Activated CD4-positive, alpha-beta memory T cell treated with anti-CD3 and anti-CD28 coated beads, Interleukin-2, amount 10 ng/mL, durations not matched to agents 7 days and 5 days (primary cell): ENCODE measurements at regions of chr2 and their contacts with region 1.

Region 1: DNA sequence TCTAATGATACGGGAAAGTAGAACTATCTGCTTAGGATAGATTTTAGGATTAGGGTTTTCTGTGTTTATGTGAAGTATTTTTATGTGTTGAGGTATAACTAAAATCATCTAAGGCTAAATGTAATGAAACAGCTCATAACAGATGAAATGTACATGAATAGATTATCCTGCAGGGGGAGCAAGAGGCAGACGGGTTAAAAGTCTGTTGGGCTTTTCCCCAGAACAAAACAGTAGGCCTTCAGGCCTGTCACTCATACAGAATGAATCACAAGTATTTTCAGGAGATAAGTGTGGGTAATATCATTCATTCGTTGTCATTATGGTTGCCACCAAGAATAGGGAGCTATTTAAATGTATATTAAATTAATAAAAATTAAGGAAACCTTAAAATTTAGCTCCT is 107.9 kb upstream of the IL1R2 start:
- DNase-seq: no peak
- H3K4me3 Mint-ChIP-seq: no peak overlapping the region
- H3K27ac Mint-ChIP-seq: no peak overlapping the region
- H3K4me1 Mint-ChIP-seq: no peaks in the 10 kb centered on the region
- H3K27me3 Mint-ChIP-seq: no peaks in the 10 kb centered on the region

Region 2: DNA sequence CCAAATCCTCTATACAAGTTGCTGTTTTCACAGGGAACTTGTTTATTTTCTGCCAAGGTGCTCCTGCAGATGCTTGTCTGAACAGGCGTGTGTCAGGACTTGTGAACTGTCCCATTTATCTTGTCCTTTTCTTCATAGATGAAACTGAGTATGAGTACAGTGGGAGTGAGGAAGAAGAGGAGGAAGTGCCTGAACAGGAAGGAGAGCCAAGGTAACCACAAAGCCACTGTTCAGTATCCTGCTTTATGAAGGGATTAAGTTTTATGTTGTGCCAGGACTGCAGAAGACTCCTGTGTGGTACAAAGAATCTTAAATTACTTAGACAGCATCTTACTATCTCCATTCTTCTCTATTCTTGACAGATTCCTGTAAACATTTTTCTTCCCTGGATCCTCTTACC is 41.4 kb before region 1 on chr2:
- CTCF ChIA-PET with region 1: no interaction called
- POLR2A ChIA-PET with region 1: no interaction called
- DNase-seq: no peak
- H3K4me3 Mint-ChIP-seq: no peak overlapping the region
- H3K27ac Mint-ChIP-seq: no peak overlapping the region
- H3K4me1 Mint-ChIP-seq: peaks cover 22% of the 10 kb centered on the region
- H3K27me3 Mint-ChIP-seq: no peaks in the 10 kb centered on the region

Region 3: DNA sequence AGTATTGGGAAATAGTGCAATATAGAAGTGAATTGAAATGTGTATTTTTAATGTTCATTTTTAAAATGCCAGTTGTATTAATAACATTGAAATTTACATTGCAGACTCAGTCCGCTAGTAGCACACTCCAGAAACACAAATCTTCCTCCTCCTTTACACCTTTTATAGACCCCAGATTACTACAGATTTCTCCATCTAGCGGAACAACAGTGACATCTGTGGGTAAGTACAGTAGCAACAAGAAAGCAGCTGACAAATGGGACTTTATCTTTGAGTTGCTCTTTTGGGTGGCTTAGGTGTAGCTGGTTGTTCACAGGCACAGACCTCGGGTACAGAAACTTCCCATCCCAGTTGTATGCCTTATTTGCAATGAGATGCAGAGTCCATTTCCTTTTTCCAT is 10.3 kb before region 1 on chr2:
- CTCF ChIA-PET with region 1: interaction called, 12 read pairs
- POLR2A ChIA-PET with region 1: no interaction called
- DNase-seq: no peak
- H3K4me3 Mint-ChIP-seq: no peak overlapping the region
- H3K27ac Mint-ChIP-seq: no peak overlapping the region
- H3K4me1 Mint-ChIP-seq: peaks cover 8% of the 10 kb centered on the region
- H3K27me3 Mint-ChIP-seq: no peaks in the 10 kb centered on the region